ENCODE measurements at regions of chr17 and their contacts with region 1.

Region 1: GRCh38 chr17:78250891-78251794 is 19.7 kb downstream of the TMEM235 start:
- DNase-seq: peak; percentile 93
- H3K4me3 Mint-ChIP-seq: peak overlapping the region; percentile 75
- H3K27ac Mint-ChIP-seq: peak overlapping the region; percentile 67
- H3K4me1 Mint-ChIP-seq: peaks cover 35% of the 10 kb centered on the region
- H3K27me3 Mint-ChIP-seq: no peaks in the 10 kb centered on the region

Region 2: GRCh38 chr17:78019367-78019975 is 231.7 kb before region 1 on chr17:
- CTCF ChIA-PET with region 1: interaction called, 5 read pairs
- intact Hi-C with region 1: loop called (anchors 1 kb)
- DNase-seq: no peak
- H3K4me3 Mint-ChIP-seq: no peak overlapping the region
- H3K27ac Mint-ChIP-seq: peak overlapping the region; percentile 47
- H3K4me1 Mint-ChIP-seq: peaks cover 27% of the 10 kb centered on the region
- H3K27me3 Mint-ChIP-seq: no peaks in the 10 kb centered on the region

Region 3: GRCh38 chr17:78112518-78113226 is 138.5 kb before region 1 on chr17:
- CTCF ChIA-PET with region 1: interaction called, 8 read pairs
- intact Hi-C with region 1: loop called (anchors 2 kb)
- DNase-seq: peak; percentile 84
- H3K4me3 Mint-ChIP-seq: no peak overlapping the region
- H3K27ac Mint-ChIP-seq: peak overlapping the region; percentile 88
- H3K4me1 Mint-ChIP-seq: peaks cover 37% of the 10 kb centered on the region
- H3K27me3 Mint-ChIP-seq: no peaks in the 10 kb centered on the region

Region 4: GRCh38 chr17:78237401-78238012 is 13.6 kb before region 1 on chr17:
- CTCF ChIA-PET with region 1: interaction called, 17 read pairs
- intact Hi-C with region 1: no loop called
- DNase-seq: no peak
- H3K4me3 Mint-ChIP-seq: no peak overlapping the region
- H3K27ac Mint-ChIP-seq: no peak overlapping the region
- H3K4me1 Mint-ChIP-seq: no peaks in the 10 kb centered on the region
- H3K27me3 Mint-ChIP-seq: peaks cover 4% of the 10 kb centered on the region

Region 5: DNA sequence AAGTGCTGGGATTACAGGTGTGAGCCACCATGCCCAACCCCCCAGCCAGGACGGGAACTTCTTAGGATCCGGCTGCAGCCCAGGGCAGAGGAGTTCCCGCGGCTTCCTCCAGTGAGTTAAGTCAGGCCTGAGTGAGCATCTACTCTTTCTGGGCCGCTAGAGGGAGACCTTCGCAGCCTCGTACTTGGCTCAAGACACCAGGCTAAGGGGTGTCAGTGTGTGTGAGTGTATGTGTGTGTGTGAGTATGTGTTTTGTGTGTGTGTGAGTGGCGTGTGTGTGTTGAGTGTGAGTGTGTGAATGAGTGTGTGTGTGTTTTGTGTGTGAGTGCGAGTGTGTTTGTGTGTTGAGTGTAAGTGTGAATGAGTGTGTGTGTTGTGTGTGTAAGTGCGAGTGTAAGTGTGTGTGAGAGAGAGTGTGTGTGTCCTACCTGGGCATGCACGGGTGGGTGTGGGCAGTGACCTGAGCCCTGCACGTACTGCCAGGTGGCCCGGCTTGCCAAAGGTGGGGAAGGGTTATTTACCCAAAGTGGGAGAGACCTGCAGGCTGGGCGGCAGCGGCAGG is 38.7 kb after region 1 on chr17:
- CTCF ChIA-PET with region 1: interaction called, 13 read pairs
- intact Hi-C with region 1: loop called (anchors 2 kb)
- DNase-seq: peak; percentile 89
- H3K4me3 Mint-ChIP-seq: no peak overlapping the region
- H3K27ac Mint-ChIP-seq: no peak overlapping the region
- H3K4me1 Mint-ChIP-seq: peaks cover 2% of the 10 kb centered on the region
- H3K27me3 Mint-ChIP-seq: no peaks in the 10 kb centered on the region

Region 6: DNA sequence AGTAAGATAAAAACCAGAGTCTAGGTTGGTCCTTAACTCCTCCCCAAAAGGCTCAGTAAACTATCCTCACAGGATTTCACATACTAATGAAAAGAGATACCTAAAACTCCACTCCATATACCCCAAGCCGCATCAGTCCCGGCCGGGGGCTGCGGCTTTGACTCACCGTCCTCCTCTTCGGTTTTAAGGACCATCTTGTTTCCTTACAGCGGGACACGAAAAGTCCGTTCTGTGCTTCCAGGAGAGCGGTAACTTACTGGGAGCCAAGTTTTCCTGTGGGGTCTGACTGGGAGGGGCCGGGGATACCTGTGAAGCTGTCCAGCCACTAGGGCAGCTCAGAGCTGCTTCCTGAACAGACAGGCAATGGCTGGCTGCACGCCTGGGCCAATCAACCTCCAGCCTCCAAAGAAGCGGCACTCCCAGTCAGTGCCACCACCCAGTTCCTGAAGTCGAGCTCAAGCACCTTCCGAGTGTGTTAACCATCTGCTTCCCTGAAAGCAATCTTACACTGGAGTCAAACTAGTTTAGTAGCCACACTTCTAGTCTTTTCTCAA is 485.5 kb after region 1 on chr17:
- CTCF ChIA-PET with region 1: no interaction called
- intact Hi-C with region 1: loop called (anchors 5 kb)
- DNase-seq: peak; percentile 84
- H3K4me3 Mint-ChIP-seq: peak overlapping the region; percentile 88
- H3K27ac Mint-ChIP-seq: peak overlapping the region; percentile 93
- H3K4me1 Mint-ChIP-seq: peaks cover 86% of the 10 kb centered on the region
- H3K27me3 Mint-ChIP-seq: no peaks in the 10 kb centered on the region